ENCODE measurements at regions of chr11 and their contacts with region 1.

Region 1: GRCh38 chr11:77187776-77188632 is 60.0 kb downstream of the MYO7A start:
- DNase-seq: peak; percentile 91
- ATAC-seq: peak; percentile 92

Region 2: DNA sequence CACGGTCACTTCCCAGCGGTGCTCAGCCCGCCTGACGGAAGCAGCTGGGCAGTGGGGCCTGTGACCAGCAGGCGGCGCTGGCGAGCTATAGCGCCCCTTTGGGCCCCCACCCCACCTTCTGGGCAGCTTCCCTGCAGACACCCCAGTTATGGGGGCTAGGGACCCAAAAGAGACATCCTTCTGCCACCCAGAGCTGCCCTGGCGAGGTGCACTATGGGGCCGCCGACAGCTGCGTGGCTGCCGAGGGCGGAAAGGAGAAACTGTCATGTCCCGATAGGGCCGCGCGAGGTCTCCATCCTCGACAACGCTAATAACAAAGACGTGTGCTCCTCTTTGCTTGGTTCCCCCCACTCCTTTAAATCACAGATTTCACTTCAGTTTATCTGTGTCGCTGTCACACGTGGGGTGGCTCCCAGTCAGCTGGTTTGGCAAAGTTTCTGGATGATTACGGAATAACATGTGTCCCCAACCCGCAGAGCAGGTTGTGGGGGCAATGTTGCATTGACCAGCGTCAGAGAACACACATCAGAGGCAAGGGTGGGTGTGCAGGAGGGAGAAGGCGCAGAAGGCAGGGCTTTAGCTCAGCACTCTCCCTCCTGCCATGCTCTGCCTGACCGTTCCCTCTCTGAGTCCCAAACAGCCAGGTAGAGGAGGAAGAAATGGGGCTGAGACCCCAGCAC is 60.6 kb before region 1 on chr11:
- intact Hi-C with region 1: loop called (anchors 2 kb)
- DNase-seq: peak; percentile 75
- ATAC-seq: peak; percentile 73

Region 3: GRCh38 chr11:77400773-77401449 is 212.9 kb after region 1 on chr11:
- intact Hi-C with region 1: no loop called
- DNase-seq: no peak
- ATAC-seq: no peak